Activated CD4-positive, alpha-beta memory T cell treated with anti-CD3 and anti-CD28 coated beads, Interleukin-2, amount 10 ng/mL, durations not matched to agents 7 days and 5 days (primary cell): ENCODE measurements at regions of chr7 and their contacts with region 1.

Region 1: GRCh38 chr7:131188367-131189339 is 139.0 kb upstream of the MKLN1 start:
- DNase-seq: peak; percentile 68
- H3K4me3 Mint-ChIP-seq: peak overlapping the region; percentile 14
- H3K27ac Mint-ChIP-seq: peak overlapping the region; percentile 93
- H3K4me1 Mint-ChIP-seq: peaks cover 64% of the 10 kb centered on the region
- H3K27me3 Mint-ChIP-seq: no peaks in the 10 kb centered on the region

Region 2: DNA sequence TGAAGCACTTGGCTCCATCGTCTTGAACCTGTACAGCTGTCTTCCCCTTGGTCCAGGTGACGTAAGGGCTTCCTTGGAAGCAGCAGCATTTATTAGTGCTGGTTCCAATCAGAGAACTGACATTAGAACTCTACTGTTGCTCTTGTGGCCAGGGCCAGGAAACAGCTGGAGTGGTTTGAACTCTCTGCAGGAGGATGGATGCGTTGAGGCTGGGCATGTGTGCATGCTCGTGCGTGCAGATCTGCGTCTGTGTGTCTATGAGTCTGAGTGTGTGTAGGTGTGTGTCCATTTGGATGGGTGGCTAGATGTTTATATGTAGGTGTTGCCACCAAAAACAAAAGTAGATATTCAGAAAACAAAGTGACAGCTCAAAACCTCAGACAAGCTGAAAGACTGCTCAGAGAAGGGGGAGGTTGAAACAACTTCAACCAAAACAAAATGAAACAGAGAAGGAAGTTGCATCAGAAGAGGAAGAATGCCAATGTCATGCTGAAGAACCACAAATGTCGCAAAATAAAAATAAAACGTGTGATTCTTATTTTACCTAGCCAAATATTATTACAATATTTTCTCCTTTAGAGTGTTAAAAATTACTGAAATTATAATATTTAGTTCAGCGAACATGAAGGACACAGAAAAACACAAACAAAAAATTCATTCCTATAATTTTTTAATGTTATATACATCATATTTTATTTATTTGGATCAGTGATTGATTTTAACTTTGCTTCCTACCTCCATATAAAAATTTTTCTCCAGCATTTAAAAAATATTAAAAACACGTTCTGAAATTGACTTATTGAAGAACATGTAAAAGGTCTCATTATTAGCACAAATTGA is 42.9 kb after region 1 on chr7:
- CTCF ChIA-PET with region 1: interaction called, 6 read pairs
- POLR2A ChIA-PET with region 1: interaction called, 39 read pairs
- DNase-seq: peak; percentile 77
- H3K4me3 Mint-ChIP-seq: peak overlapping the region; percentile 73
- H3K27ac Mint-ChIP-seq: peak overlapping the region; percentile 94
- H3K4me1 Mint-ChIP-seq: peaks cover 63% of the 10 kb centered on the region
- H3K27me3 Mint-ChIP-seq: no peaks in the 10 kb centered on the region

Region 3: GRCh38 chr7:131327626-131328376 is 139.1 kb after region 1 on chr7 and contains the start of gene MKLN1:
- CTCF ChIA-PET with region 1: interaction called, 4 read pairs
- POLR2A ChIA-PET with region 1: interaction called, 16 read pairs
- DNase-seq: peak; percentile 89
- H3K4me3 Mint-ChIP-seq: peak within 1 kb of the TSS; percentile 95
- H3K27ac Mint-ChIP-seq: peak within 1 kb of the TSS; percentile 79
- H3K4me1 Mint-ChIP-seq: peaks cover 53% of the 10 kb centered on the region
- H3K27me3 Mint-ChIP-seq: no peaks in the 10 kb centered on the region
- total RNA-seq, gene MKLN1: 35.9 to 37.3 TPM

Region 4: GRCh38 chr7:131443496-131443895 is 254.8 kb after region 1 on chr7:
- CTCF ChIA-PET with region 1: no interaction called
- POLR2A ChIA-PET with region 1: no interaction called
- DNase-seq: no peak
- H3K4me3 Mint-ChIP-seq: no peak overlapping the region
- H3K27ac Mint-ChIP-seq: no peak overlapping the region
- H3K4me1 Mint-ChIP-seq: no peaks in the 10 kb centered on the region
- H3K27me3 Mint-ChIP-seq: no peaks in the 10 kb centered on the region